Posterior cingulate gyrus (tissue), 11 donors: ENCODE measurements at regions of chr9 and their contacts with region 1.

Region 1: DNA sequence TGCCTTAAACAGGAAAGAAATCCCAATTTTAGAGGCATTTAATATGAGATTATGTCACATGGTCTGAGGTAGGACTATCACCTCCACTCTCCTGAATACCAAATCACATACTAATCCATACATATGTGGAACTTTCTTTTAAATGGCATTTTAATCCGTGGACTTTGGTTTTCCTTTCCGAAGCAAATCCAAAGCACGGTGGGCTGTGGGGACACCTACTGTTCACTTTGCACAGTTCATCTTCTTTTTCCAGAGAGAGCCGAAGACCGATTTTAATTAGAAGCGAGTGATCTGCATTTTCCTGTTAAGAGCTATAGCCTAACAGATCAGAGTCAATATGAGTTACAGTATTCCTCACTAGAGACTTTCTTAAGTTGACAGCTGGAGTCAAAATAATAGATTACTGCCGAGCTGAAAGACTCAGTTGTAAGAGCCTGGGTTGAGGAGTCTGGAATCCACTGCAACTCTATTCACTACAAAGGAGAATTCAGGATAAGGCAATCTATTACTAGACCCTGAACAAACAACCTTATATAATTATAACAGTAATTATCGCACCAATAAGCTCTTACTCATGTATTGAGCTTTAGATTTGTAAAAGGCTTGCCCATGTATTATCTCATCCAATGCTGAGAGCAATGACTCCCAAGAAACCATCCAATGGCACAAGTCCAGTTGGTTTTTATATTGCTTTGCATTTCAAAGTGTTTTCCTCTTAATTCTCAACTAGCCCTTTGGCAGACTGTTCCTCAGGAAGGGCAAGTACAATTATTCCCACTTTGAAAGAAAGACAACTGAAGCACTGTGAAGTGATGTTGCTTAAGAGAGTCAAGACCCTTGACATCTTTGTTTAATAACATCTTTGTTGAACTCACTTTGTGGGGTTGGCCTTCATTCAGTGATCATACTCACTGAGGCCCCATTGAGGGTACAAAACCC is 144.7 kb downstream of the TRPM6 start:
- DNase-seq: peak in 7 of 10 donors; percentile 37 to 91 (median 56)

Region 2: GRCh38 chr9:73200694-73201452 is 1542.2 kb before region 1 on chr9:
- intact Hi-C with region 1: loop called (anchors 10 kb)
- DNase-seq: no peak

Region 3: DNA sequence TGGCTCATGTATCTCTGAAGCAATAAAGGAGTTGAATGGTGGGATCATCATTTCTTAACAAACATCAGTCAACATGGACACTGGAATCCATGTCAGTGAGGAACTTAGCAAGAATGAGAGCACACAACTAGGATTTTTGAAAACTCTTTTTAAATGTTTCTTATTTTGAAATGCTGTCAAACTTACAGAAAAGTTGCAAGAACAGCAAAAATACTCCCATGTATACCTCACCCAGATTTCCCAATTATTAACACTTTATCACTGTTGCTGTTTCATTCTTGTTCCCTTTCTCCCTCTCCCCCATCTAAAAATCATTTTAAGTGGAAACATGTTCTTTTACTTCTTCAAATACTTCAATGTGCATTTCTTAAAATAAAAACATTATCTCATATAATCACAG is 180.4 kb before region 1 on chr9:
- intact Hi-C with region 1: no loop called
- DNase-seq: no peak

Region 4: GRCh38 chr9:75111019-75111622 is 368.1 kb after region 1 on chr9:
- intact Hi-C with region 1: no loop called
- DNase-seq: no peak